Endothelial cell of umbilical vein (primary cell): ENCODE measurements at regions of chr3 and their contacts with region 1.

Region 1: GRCh38 chr3:188607805-188608315 is 453.9 kb downstream of the LPP start:
- DNase-seq: no peak
- H3K4me3 ChIP-seq: no peak overlapping the region
- H3K27ac ChIP-seq: no peak overlapping the region
- H3K4me1 ChIP-seq: no peaks in the 10 kb centered on the region
- H3K27me3 ChIP-seq: no peaks in the 10 kb centered on the region
- CTCF ChIP-seq: no peak
- POLR2A ChIP-seq: no peak

Region 2: GRCh38 chr3:188594139-188594538 is 13.7 kb before region 1 on chr3:
- CTCF ChIA-PET with region 1: interaction called, 3 read pairs
- POLR2A ChIA-PET with region 1: interaction called, 4 read pairs
- dilution Hi-C with region 1: no loop called
- intact Hi-C with region 1: loop called (anchors 1 kb)
- DNase-seq: peak; percentile 86
- H3K4me3 ChIP-seq: no peak overlapping the region
- H3K27ac ChIP-seq: peak overlapping the region; percentile 50
- H3K4me1 ChIP-seq: peaks cover 25% of the 10 kb centered on the region
- H3K27me3 ChIP-seq: no peaks in the 10 kb centered on the region
- CTCF ChIP-seq: no peak
- POLR2A ChIP-seq: no peak